Endothelial cell of umbilical vein (primary cell): ENCODE measurements at regions of chr6 and their contacts with region 1.

Region 1: GRCh38 chr6:108492131-108492766 is 68.5 kb upstream of the FOXO3 start:
- DNase-seq: peak; percentile 77
- H3K4me3 ChIP-seq: no peak overlapping the region
- H3K27ac ChIP-seq: no peak overlapping the region
- H3K4me1 ChIP-seq: no peaks in the 10 kb centered on the region
- H3K27me3 ChIP-seq: no peaks in the 10 kb centered on the region
- CTCF ChIP-seq: peak; percentile 47 to 54
- POLR2A ChIP-seq: no peak

Region 2: GRCh38 chr6:107982486-107982885 is 509.8 kb before region 1 on chr6:
- CTCF ChIA-PET with region 1: interaction called, 14 read pairs
- POLR2A ChIA-PET with region 1: no interaction called
- dilution Hi-C with region 1: no loop called
- intact Hi-C with region 1: loop called (anchors 10 kb)
- DNase-seq: no peak
- H3K4me3 ChIP-seq: no peak overlapping the region
- H3K27ac ChIP-seq: no peak overlapping the region
- H3K4me1 ChIP-seq: no peaks in the 10 kb centered on the region
- H3K27me3 ChIP-seq: peaks cover 0 to 6% of the 10 kb centered on the region in 2 experiments
- CTCF ChIP-seq: no peak
- POLR2A ChIP-seq: no peak

Region 3: DNA sequence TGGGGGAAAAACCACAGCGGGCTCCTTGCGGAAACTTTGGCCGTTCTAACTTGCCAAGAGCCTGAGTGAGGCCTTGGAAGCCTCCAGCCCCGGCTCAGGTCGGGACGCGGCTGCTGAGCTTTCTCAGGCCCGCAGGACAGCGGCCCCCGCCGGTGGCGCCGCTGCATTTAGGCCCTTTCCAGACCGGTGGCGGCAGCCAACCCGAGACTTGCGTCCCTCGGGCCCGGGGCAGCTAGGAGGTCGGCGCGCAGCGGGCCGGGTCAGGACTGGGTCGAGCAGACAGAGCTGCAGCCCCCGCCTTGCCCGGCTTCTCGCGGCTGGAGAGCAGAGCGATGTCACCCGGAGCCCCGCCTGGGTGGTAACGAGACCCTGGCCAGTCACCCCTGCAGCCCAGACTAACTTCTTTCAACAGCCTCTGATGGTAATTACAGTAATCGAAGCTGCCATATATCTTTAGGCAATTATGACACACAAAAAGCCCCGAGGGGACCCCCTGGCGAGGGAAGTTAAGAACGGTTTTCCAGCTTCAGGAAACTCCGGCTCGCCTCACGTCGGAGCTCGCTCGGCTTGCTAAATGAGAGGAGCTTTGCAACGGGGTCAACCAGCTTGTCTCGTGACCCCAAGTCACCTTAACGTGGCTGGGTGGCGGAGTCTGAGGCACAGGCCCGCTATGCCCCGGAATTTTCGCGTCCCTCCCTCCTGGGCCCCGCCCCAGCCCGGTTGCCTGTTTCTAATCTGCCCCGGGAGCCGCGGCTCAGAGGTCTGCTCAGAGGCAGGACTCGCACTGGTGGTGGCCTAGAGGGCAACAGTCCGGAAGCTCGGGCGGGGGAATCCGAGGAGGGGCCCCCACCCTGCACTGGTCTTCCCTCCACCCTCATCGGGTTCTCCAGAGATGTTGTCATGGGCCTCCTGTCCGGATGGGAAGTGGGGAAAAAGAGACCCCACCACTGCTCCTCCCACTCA is 323.5 kb before region 1 on chr6:
- CTCF ChIA-PET with region 1: interaction called, 20 read pairs
- POLR2A ChIA-PET with region 1: interaction called, 3 read pairs
- dilution Hi-C with region 1: no loop called
- intact Hi-C with region 1: loop called (anchors 5 kb)
- DNase-seq: no peak
- H3K4me3 ChIP-seq: no peak overlapping the region
- H3K27ac ChIP-seq: no peak overlapping the region
- H3K4me1 ChIP-seq: peaks cover 4% of the 10 kb centered on the region
- H3K27me3 ChIP-seq: peaks cover 90 to 100% of the 10 kb centered on the region in 2 experiments
- CTCF ChIP-seq: peak; percentile 8 to 48
- POLR2A ChIP-seq: no peak

Region 4: DNA sequence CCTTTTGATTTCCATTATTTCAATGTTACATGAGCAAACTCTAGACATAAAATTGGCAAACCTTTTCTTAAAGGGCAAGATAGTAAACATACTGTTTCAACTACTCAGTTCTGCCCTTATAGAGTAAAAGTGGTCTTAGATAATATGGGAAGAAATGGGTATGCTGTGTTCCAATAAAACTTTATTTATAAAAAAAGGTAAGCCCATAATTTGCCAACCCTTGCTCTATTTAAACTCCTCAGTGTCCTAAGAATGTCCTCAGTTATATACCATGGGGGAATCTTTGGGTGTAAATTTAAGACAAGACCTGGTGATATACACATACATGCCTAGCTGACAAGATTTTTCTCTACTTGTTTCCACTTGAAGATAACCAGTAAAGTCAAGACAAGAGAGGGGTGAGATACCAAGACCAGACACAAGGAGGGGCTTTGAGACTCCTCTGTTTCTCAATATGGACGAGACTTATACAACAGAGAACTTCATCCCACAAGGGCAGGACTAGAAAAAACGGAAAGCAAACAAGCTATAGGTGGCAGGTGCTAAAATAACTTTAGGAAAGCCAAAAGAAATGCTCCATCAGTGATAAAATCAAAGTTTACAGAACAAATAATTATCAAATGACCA is 241.9 kb before region 1 on chr6:
- CTCF ChIA-PET with region 1: interaction called, 95 read pairs
- POLR2A ChIA-PET with region 1: no interaction called
- dilution Hi-C with region 1: no loop called
- intact Hi-C with region 1: no loop called
- DNase-seq: peak; percentile 37
- H3K4me3 ChIP-seq: no peak overlapping the region
- H3K27ac ChIP-seq: no peak overlapping the region
- H3K4me1 ChIP-seq: peaks cover 14% of the 10 kb centered on the region
- H3K27me3 ChIP-seq: no peaks in the 10 kb centered on the region
- CTCF ChIP-seq: peak in 1 of 2 donors; percentile 23
- POLR2A ChIP-seq: no peak

Region 5: GRCh38 chr6:108309844-108310243 is 182.4 kb before region 1 on chr6:
- CTCF ChIA-PET with region 1: interaction called, 12 read pairs
- POLR2A ChIA-PET with region 1: no interaction called
- dilution Hi-C with region 1: no loop called
- intact Hi-C with region 1: no loop called
- DNase-seq: no peak
- H3K4me3 ChIP-seq: no peak overlapping the region
- H3K27ac ChIP-seq: no peak overlapping the region
- H3K4me1 ChIP-seq: no peaks in the 10 kb centered on the region
- H3K27me3 ChIP-seq: no peaks in the 10 kb centered on the region
- CTCF ChIP-seq: no peak
- POLR2A ChIP-seq: no peak

Region 6: GRCh38 chr6:108438918-108439317 is 53.3 kb before region 1 on chr6:
- CTCF ChIA-PET with region 1: interaction called, 12 read pairs
- POLR2A ChIA-PET with region 1: no interaction called
- dilution Hi-C with region 1: no loop called
- intact Hi-C with region 1: no loop called
- DNase-seq: no peak
- H3K4me3 ChIP-seq: no peak overlapping the region
- H3K27ac ChIP-seq: no peak overlapping the region
- H3K4me1 ChIP-seq: peaks cover 2% of the 10 kb centered on the region
- H3K27me3 ChIP-seq: no peaks in the 10 kb centered on the region
- CTCF ChIP-seq: no peak
- POLR2A ChIP-seq: no peak

Region 7: DNA sequence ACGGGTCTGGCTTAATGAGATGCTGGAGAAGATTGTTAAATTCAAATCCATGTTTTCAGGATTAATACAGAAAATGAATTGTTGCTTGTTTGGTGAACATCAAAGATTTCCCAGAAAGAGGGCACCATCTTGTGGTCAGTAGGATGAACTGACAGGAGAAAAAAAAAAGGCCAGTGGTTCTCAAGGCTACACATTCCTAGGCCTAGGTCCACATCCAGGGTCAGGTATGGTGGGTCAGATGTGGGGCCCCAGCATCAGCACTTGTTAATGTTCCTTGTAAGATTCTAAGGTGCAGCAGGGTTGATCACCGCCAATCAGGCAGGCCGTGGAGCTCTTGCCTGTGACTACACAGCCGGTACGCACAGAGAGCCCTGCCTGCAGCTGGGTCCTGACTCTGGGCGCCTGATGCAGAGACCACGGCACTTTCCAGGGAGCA is 34.5 kb after region 1 on chr6:
- CTCF ChIA-PET with region 1: interaction called, 24 read pairs
- POLR2A ChIA-PET with region 1: no interaction called
- dilution Hi-C with region 1: no loop called
- intact Hi-C with region 1: no loop called
- DNase-seq: peak; percentile 52
- H3K4me3 ChIP-seq: no peak overlapping the region
- H3K27ac ChIP-seq: no peak overlapping the region
- H3K4me1 ChIP-seq: no peaks in the 10 kb centered on the region
- H3K27me3 ChIP-seq: peaks cover 0 to 2% of the 10 kb centered on the region in 2 experiments
- CTCF ChIP-seq: peak; percentile 59 to 65
- POLR2A ChIP-seq: no peak